ENCODE measurements at regions of chr4 and their contacts with region 1.

Region 1: DNA sequence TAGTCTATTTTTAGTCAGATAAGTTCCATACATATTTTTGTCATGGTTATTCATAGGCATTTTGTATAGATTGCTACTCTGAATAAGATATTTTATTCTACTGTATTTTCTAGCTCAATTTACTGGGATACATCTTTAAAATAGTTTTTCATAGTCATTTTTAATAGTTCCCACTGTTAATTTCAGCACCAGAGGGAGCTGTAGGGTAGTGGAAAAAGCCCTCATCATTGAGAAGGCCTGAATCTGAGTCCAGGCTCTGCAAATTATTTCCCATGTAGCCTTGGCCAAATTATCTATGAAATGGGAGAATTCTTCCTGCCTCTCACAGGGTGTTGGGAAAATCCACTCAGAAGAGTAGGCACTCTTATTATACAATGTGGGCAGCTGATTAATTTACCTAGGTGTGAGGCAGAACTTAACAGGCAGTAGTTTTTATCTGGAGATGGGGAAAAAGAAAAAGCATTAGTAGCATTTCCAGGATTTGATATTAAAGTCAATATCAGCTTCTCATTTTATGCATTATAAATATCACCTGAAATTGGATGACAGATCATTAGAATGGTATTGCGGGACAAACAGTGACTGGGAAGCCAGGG is 102.9 kb upstream of the PAQR3 start:
- DNase-seq: peak; percentile 32
- H3K4me3 ChIP-seq: no peak overlapping the region
- H3K27ac ChIP-seq: no peak overlapping the region
- H3K4me1 ChIP-seq: no peaks in the 10 kb centered on the region
- H3K27me3 ChIP-seq: no peaks in the 10 kb centered on the region
- CTCF ChIP-seq: peak; percentile 11 to 15
- POLR2A ChIP-seq: no peak

Region 2: DNA sequence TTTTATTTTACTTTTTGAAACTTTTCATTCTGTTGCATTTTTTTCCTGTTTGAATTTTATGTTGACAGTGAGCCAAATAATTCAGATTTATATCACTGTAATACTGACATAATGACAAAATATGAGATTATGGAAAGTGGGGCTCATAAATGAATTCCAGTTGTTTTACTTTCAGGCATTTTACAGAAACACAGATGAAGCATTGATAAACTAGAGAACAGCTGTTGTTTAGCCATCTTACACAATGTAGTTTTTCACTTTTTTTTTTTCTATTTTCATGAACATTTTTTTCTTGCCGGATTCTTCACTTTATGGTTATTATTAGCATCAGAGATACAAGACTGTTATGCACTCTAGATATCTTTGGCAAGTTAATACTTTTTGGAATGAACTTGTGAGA is 11.2 kb before region 1 on chr4:
- CTCF ChIA-PET with region 1: interaction called, 16 read pairs
- POLR2A ChIA-PET with region 1: no interaction called
- dilution Hi-C with region 1: no loop called
- intact Hi-C with region 1: no loop called
- DNase-seq: no peak
- H3K4me3 ChIP-seq: no peak overlapping the region
- H3K27ac ChIP-seq: no peak overlapping the region
- H3K4me1 ChIP-seq: no peaks in the 10 kb centered on the region
- H3K27me3 ChIP-seq: no peaks in the 10 kb centered on the region
- CTCF ChIP-seq: no peak
- POLR2A ChIP-seq: no peak

Region 3: DNA sequence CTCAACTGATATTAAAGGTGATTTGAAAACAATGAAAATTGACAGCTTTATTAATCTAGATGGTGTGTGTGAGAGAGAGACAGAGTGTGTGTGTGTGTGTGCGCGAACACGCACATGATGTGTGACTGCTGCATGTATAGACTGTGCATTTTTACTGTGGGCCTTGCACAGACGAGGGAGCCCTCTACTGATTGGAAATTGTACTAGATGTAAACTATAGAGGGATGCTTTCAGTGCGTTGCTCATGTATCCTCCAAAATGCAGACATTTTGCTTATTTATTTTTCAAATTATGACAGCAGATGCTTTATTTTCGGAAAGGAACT is 534.2 kb after region 1 on chr4:
- CTCF ChIA-PET with region 1: interaction called, 6 read pairs
- POLR2A ChIA-PET with region 1: no interaction called
- dilution Hi-C with region 1: no loop called
- intact Hi-C with region 1: loop called (anchors 1 kb)
- DNase-seq: peak; percentile 39
- H3K4me3 ChIP-seq: no peak overlapping the region
- H3K27ac ChIP-seq: no peak overlapping the region
- H3K4me1 ChIP-seq: no peaks in the 10 kb centered on the region
- H3K27me3 ChIP-seq: peaks cover 0 to 2% of the 10 kb centered on the region in 2 experiments
- CTCF ChIP-seq: peak in 1 of 2 donors; percentile 23
- POLR2A ChIP-seq: no peak

Region 4: GRCh38 chr4:80335554-80336358 is 1293.6 kb after region 1 on chr4 and contains the start of gene CFAP299:
- CTCF ChIA-PET with region 1: interaction called, 5 read pairs
- POLR2A ChIA-PET with region 1: no interaction called
- dilution Hi-C with region 1: no loop called
- intact Hi-C with region 1: loop called (anchors 10 kb)
- DNase-seq: peak; percentile 68
- H3K4me3 ChIP-seq: peak within 1 kb of the TSS; percentile 37 to 67 (median 46)
- H3K27ac ChIP-seq: no peak within 1 kb of the TSS
- H3K4me1 ChIP-seq: peaks cover 6% of the 10 kb centered on the region
- H3K27me3 ChIP-seq: peaks cover 18 to 63% of the 10 kb centered on the region in 2 experiments
- CTCF ChIP-seq: peak; percentile 54 to 67
- POLR2A ChIP-seq: no peak
- total RNA-seq, gene CFAP299: not detected in 2 replicates

Measured in endothelial cell of umbilical vein (primary cell).